HepG2 (cell line): ENCODE measurements at regions of chr2 and their contacts with region 1.

Region 1: DNA sequence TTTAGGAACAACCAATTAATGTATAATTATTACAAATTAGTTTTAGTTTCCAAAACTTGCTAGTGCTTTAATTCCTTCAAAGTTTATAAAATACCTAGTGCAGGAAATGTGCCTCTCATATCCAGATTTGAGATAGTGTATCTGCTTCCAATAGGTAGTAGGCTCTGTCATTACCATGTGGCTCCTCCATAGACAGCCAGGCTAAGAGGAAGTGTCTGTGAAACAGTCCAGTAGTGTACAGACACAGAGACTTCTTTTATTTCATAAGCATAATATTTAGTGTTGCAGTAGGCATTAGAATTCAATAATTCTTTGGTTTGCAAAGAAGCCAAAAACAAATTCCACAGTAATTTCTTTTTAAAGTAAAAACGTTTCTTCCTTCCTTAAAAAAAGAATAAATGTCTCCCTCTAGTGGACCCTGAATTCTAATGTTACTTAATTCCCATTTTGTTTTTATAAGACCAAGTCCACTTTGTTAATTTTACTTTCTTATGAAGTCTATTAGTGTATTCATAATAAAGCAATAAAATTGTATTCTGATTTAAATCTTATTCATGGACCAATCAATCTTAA is 101.2 kb downstream of the NEB start:
- DNase-seq: peak; percentile 31
- ATAC-seq: peak; percentile 72
- H3K4me3 ChIP-seq: no peak overlapping the region
- H3K27ac ChIP-seq: no peak overlapping the region
- H3K4me1 ChIP-seq: peaks cover 23% of the 10 kb centered on the region
- H3K27me3 ChIP-seq: no peaks in the 10 kb centered on the region
- CTCF ChIP-seq: peak; percentile 32; the same call in 1 of the 2 replicates
- EP300 ChIP-seq: no peak
- POLR2A ChIP-seq: no peak
- RAD21 ChIP-seq: no peak

Region 2: DNA sequence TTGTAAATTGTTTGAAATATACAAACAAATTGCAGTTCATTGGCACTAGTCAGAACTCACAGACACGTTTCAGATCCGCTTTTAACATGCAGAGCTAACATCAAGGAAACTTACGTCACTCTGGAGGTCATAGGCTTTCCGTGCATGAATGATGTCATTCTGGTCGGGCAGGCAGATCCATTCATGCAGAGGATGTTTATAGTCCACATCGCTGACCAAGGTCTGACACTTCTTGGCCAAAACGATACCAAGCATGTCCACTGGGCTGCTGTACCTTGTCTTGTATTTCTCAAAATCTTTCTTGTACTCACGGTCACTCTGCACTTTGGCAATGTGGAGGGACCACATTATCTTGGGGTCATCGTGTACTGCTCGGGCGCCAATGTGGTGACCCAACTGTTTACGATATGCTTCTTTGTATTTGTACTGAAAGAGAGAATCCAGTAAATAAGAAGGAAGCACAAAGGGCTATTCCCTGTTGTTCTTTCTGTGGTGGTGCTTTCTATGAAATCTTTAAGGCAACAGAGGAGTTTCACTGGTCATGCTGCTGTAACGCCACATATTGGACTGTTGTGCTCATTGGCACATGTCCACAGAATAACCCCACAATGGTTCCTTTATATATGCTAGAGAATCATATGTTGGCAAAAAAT is 13.6 kb before region 1 on chr2:
- CTCF ChIA-PET with region 1: no interaction called
- POLR2A ChIA-PET with region 1: no interaction called
- in situ Hi-C with region 1: no loop called
- intact Hi-C with region 1: loop called (anchors 1 kb)
- DNase-seq: peak; percentile 59
- ATAC-seq: peak; percentile 96
- H3K4me3 ChIP-seq: peak overlapping the region in 1 of 3 experiments; percentile 31; a peak in 1 of 6 replicates
- H3K27ac ChIP-seq: no peak overlapping the region
- H3K4me1 ChIP-seq: peaks cover 10% of the 10 kb centered on the region
- H3K27me3 ChIP-seq: no peaks in the 10 kb centered on the region; a peak in 1 of 5 replicates
- CTCF ChIP-seq: no peak
- EP300 ChIP-seq: no peak
- POLR2A ChIP-seq: no peak
- RAD21 ChIP-seq: no peak

Region 3: DNA sequence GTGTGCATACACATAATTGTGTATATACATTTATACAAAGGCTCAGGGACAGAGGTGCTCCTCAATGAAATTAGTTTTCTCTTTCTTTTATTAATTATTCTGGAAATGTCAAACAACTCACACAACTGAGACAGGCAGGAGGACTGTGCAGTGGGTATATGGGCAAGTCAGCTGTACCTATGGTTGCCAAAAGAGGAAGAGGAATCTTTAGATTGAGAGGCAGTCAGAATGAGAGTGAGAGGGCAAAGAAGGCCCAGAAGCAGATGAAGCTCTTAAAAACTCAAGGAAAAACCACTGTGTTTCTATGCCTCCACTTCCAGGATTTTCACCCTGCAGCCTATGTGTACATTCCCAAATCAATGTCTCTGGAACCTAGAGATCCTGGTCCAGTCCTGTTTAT is 386.7 kb after region 1 on chr2:
- CTCF ChIA-PET with region 1: no interaction called
- POLR2A ChIA-PET with region 1: no interaction called
- in situ Hi-C with region 1: loop called (anchors 25 kb)
- intact Hi-C with region 1: loop called (anchors 5 kb)
- DNase-seq: no peak
- ATAC-seq: no peak
- H3K4me3 ChIP-seq: no peak overlapping the region
- H3K27ac ChIP-seq: no peak overlapping the region
- H3K4me1 ChIP-seq: peaks cover 28% of the 10 kb centered on the region
- H3K27me3 ChIP-seq: no peaks in the 10 kb centered on the region
- CTCF ChIP-seq: no peak
- EP300 ChIP-seq: no peak
- POLR2A ChIP-seq: no peak
- RAD21 ChIP-seq: no peak

Region 4: GRCh38 chr2:152717228-152718075 is 1084.4 kb after region 1 on chr2 and contains the start of gene PRPF40A:
- CTCF ChIA-PET with region 1: no interaction called
- POLR2A ChIA-PET with region 1: no interaction called
- in situ Hi-C with region 1: no loop called
- intact Hi-C with region 1: no loop called
- DNase-seq: peak; percentile 97
- ATAC-seq: peak; percentile 82
- H3K4me3 ChIP-seq: peak within 1 kb of the TSS; percentile 75 to 96 (median 82)
- H3K27ac ChIP-seq: peak within 1 kb of the TSS; percentile 97
- H3K4me1 ChIP-seq: peaks cover 62% of the 10 kb centered on the region
- H3K27me3 ChIP-seq: no peaks in the 10 kb centered on the region; a peak in 1 of 5 replicates
- CTCF ChIP-seq: no peak
- EP300 ChIP-seq: 0 out of 4 replicates have a peak, but pooled peaks of 1 of the 2 experiments have one; percentile 17
- POLR2A ChIP-seq: peak; percentile 83 to 93
- RAD21 ChIP-seq: 0 out of 2 replicates have a peak, but pooled peaks have one; percentile 19
- total RNA-seq, gene PRPF40A: 207 and 298 TPM in 2 replicates